T-cell (primary cell): ENCODE measurements at regions of chr10 and their contacts with region 1.

Region 1: DNA sequence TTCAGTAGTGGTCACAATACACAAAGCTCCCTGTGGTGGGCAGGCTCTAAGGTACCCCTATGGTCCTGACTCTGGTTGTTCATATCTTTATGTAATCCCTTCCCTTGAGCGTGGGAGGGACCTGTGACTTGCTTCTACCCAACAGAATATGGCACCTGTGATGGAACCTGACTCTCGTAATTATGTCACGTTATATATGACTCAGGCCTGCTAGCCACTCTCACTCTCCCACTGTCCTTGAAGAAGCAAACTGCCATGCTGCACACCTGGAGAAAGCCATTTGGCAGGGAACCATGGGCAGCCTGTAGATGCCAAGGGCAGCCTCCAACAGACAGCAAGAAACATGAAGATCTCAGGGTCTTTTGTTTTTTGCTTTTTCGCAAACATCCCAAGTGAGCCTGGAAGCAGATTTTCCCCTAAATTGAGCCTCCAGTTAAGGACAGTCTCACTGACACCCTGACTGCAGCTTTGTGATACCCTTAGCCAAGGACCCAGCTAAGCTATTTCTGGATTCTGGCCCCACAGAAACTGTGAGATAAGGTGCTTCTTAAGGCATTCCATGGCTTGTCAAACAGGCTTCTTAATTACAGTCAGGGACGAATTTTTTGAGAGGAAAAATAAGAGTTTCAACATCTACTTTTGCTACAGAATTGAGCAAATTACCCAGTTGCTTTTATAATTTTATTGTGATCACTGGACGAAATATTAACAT is 49.6 kb downstream of the IFIT5 start:
- DNase-seq: no peak
- ATAC-seq: no peak
- H3K4me3 ChIP-seq: no peak overlapping the region
- H3K4me3 Mint-ChIP-seq: no peak overlapping the region
- H3K27ac ChIP-seq: no peak overlapping the region
- H3K27ac Mint-ChIP-seq: no peak overlapping the region
- H3K4me1 ChIP-seq: no peaks in the 10 kb centered on the region
- H3K4me1 Mint-ChIP-seq: no peaks in the 10 kb centered on the region
- H3K27me3 ChIP-seq: no peaks in the 10 kb centered on the region
- H3K27me3 Mint-ChIP-seq: peaks cover 4 to 5% of the 10 kb centered on the region in 2 donors

Region 2: GRCh38 chr10:90674928-90675327 is 1210.9 kb after region 1 on chr10:
- CTCF ChIA-PET with region 1: no interaction called
- POLR2A ChIA-PET with region 1: no interaction called
- DNase-seq: no peak
- ATAC-seq: no peak
- H3K4me3 ChIP-seq: no peak overlapping the region
- H3K4me3 Mint-ChIP-seq: no peak overlapping the region
- H3K27ac ChIP-seq: no peak overlapping the region
- H3K27ac Mint-ChIP-seq: no peak overlapping the region
- H3K4me1 ChIP-seq: no peaks in the 10 kb centered on the region
- H3K4me1 Mint-ChIP-seq: no peaks in the 10 kb centered on the region
- H3K27me3 ChIP-seq: no peaks in the 10 kb centered on the region
- H3K27me3 Mint-ChIP-seq: peaks cover 1 to 23% of the 10 kb centered on the region in 2 donors

Region 3: GRCh38 chr10:90834326-90834725 is 1370.3 kb after region 1 on chr10:
- CTCF ChIA-PET with region 1: interaction called in 1 of 2 experiments, 13 read pairs
- POLR2A ChIA-PET with region 1: no interaction called
- DNase-seq: no peak
- ATAC-seq: no peak
- H3K4me3 ChIP-seq: no peak overlapping the region
- H3K4me3 Mint-ChIP-seq: no peak overlapping the region
- H3K27ac ChIP-seq: no peak overlapping the region
- H3K27ac Mint-ChIP-seq: no peak overlapping the region
- H3K4me1 ChIP-seq: no peaks in the 10 kb centered on the region
- H3K4me1 Mint-ChIP-seq: no peaks in the 10 kb centered on the region
- H3K27me3 ChIP-seq: peaks cover 0 to 2% of the 10 kb centered on the region in 2 experiments
- H3K27me3 Mint-ChIP-seq: peaks cover 8 to 11% of the 10 kb centered on the region in 2 donors